ENCODE measurements at regions of chr3 and their contacts with region 1.

Region 1: DNA sequence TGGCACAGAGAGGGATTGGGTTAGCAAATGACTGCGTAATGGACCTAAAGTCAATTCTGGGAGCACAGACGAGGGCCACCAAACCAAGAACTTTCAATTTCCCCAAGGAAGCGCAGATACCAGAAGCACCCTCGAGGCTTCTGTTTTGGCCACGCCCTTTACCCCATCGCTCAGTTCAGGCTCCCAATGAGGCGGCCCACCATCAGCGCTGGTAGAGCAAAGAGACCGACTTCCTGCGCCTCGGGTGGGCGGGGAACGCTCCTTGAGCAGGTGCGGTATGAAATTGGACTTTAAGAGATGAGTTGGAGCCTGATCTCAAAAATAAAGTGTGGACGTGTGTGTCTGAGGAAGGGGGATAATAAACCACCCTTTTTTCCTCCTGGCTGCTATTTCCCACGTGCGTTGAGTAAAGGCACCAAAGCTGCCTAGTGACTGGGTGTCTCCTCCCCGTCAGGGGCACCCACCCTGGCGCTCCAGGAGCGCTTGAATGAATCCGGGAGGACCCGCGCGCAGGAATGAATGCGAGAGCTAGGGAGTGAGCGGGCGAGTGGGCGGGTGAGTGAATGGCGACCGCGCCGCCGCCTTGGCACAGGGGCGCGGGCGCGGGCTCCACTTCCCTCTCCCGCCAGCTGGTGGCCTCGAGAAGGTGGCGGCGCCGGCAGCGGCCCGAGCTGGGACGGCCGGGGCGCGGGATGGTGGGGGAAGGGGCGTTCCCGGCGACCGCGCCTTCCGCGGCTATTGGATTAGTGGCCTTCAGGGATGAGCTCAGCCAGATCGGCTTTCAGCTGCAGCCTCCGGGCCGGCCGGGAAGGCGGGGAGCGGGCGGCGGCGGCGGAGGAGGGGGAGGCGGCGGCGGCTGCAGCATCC is at the start of gene SPSB4:
- DNase-seq: peak; percentile 95
- H3K4me3 ChIP-seq: peak within 1 kb of the TSS; percentile 23 to 49; a peak in 3 of 4 replicates
- H3K27ac ChIP-seq: peak within 1 kb of the TSS in 1 of 2 experiments; percentile 50; a peak in 2 of 4 replicates
- H3K4me1 ChIP-seq: peaks cover 0 to 6% of the 10 kb centered on the region in 2 experiments; a peak in 2 of 4 replicates
- H3K27me3 ChIP-seq: peaks cover 22% of the 10 kb centered on the region
- CTCF ChIP-seq: no peak; the same call in 1 of the 2 replicates
- EP300 ChIP-seq: no peak
- RAD21 ChIP-seq: peak; percentile 51
- polyA plus RNA-seq, gene SPSB4: 0.10 and 0.21 TPM in 2 replicates

Region 2: GRCh38 chr3:140602781-140603180 is 448.0 kb before region 1 on chr3:
- CTCF ChIA-PET with region 1: no interaction called
- POLR2A ChIA-PET with region 1: no interaction called
- DNase-seq: peak; percentile 17
- H3K4me3 ChIP-seq: no peak overlapping the region
- H3K27ac ChIP-seq: peak overlapping the region in 1 of 2 experiments; percentile 75; a peak in 2 of 4 replicates
- H3K4me1 ChIP-seq: peaks cover 0 to 12% of the 10 kb centered on the region in 2 experiments; a peak in 2 of 4 replicates
- H3K27me3 ChIP-seq: no peaks in the 10 kb centered on the region
- CTCF ChIP-seq: no peak
- EP300 ChIP-seq: peak in 1 of 2 experiments; percentile 47; a peak in 1 of 4 replicates
- RAD21 ChIP-seq: no peak; the same call in 1 of the 2 replicates

Region 3: GRCh38 chr3:140870370-140870769 is 180.4 kb before region 1 on chr3:
- CTCF ChIA-PET with region 1: no interaction called
- POLR2A ChIA-PET with region 1: no interaction called
- DNase-seq: no peak
- H3K4me3 ChIP-seq: no peak overlapping the region
- H3K27ac ChIP-seq: no peak overlapping the region
- H3K4me1 ChIP-seq: no peaks in the 10 kb centered on the region
- H3K27me3 ChIP-seq: no peaks in the 10 kb centered on the region
- CTCF ChIP-seq: no peak
- EP300 ChIP-seq: no peak
- RAD21 ChIP-seq: no peak

Region 4: GRCh38 chr3:141000027-141000663 is 50.7 kb before region 1 on chr3:
- CTCF ChIA-PET with region 1: interaction called, 12 read pairs
- POLR2A ChIA-PET with region 1: no interaction called
- DNase-seq: peak; percentile 60
- H3K4me3 ChIP-seq: no peak overlapping the region; a peak in 1 of 4 replicates
- H3K27ac ChIP-seq: no peak overlapping the region
- H3K4me1 ChIP-seq: no peaks in the 10 kb centered on the region
- H3K27me3 ChIP-seq: no peaks in the 10 kb centered on the region
- CTCF ChIP-seq: peak; percentile 55
- EP300 ChIP-seq: no peak
- RAD21 ChIP-seq: peak; percentile 90

Region 5: GRCh38 chr3:141039589-141039988 is 11.2 kb before region 1 on chr3:
- CTCF ChIA-PET with region 1: interaction called, 22 read pairs
- POLR2A ChIA-PET with region 1: no interaction called
- DNase-seq: no peak
- H3K4me3 ChIP-seq: no peak overlapping the region
- H3K27ac ChIP-seq: no peak overlapping the region
- H3K4me1 ChIP-seq: no peaks in the 10 kb centered on the region
- H3K27me3 ChIP-seq: no peaks in the 10 kb centered on the region
- CTCF ChIP-seq: no peak
- EP300 ChIP-seq: no peak
- RAD21 ChIP-seq: no peak

Region 6: DNA sequence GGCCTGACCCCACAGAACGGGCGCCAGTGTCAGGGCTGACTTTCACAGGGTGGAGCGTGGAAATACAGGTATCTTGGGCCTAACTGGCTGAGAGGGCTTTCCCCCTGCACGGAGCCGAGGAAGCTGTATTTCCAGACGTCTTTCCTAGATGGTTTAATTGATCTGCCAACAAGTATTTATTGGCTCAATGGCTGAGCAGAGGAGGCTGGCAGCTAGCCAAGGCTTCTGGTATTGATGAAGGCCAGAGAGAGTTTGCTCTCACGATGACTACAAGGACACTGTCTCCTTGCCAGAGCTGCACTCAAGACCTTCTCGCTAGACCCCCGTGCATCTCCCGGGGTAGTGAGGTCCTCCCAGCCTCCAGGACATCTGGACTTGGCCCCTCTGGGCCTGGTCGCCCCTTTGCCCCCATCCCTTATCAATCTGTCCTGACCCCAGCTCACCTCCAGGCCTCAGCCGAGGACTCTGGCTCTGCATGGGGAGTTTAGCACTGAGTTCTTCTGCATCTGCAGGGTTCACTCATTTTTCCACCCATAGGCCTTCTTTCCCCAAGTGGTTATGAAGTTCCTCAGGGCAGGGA is 21.0 kb after region 1 on chr3:
- CTCF ChIA-PET with region 1: interaction called, 61 read pairs
- POLR2A ChIA-PET with region 1: interaction called, 6 read pairs
- DNase-seq: peak; percentile 49
- H3K4me3 ChIP-seq: no peak overlapping the region
- H3K27ac ChIP-seq: peak overlapping the region in 1 of 2 experiments; percentile 30; a peak in 1 of 4 replicates
- H3K4me1 ChIP-seq: peaks cover 0 to 25% of the 10 kb centered on the region in 2 experiments; a peak in 1 of 4 replicates
- H3K27me3 ChIP-seq: no peaks in the 10 kb centered on the region
- CTCF ChIP-seq: no peak
- EP300 ChIP-seq: no peak
- RAD21 ChIP-seq: no peak

Region 7: GRCh38 chr3:141084250-141084649 is 33.4 kb after region 1 on chr3:
- CTCF ChIA-PET with region 1: interaction called, 14 read pairs
- POLR2A ChIA-PET with region 1: no interaction called
- DNase-seq: peak; percentile 51
- H3K4me3 ChIP-seq: no peak overlapping the region
- H3K27ac ChIP-seq: no peak overlapping the region; a peak in 1 of 4 replicates
- H3K4me1 ChIP-seq: peaks cover 0 to 49% of the 10 kb centered on the region in 2 experiments; a peak in 1 of 4 replicates
- H3K27me3 ChIP-seq: no peaks in the 10 kb centered on the region
- CTCF ChIP-seq: no peak
- EP300 ChIP-seq: no peak; a peak in 1 of 4 replicates
- RAD21 ChIP-seq: no peak

Region 8: GRCh38 chr3:141105828-141106628 is 55.2 kb after region 1 on chr3:
- CTCF ChIA-PET with region 1: interaction called, 77 read pairs
- POLR2A ChIA-PET with region 1: interaction called, 10 read pairs
- DNase-seq: peak; percentile 76
- H3K4me3 ChIP-seq: no peak overlapping the region; a peak in 1 of 4 replicates
- H3K27ac ChIP-seq: no peak overlapping the region
- H3K4me1 ChIP-seq: peaks cover 0 to 21% of the 10 kb centered on the region in 2 experiments; a peak in 1 of 4 replicates
- H3K27me3 ChIP-seq: no peaks in the 10 kb centered on the region
- CTCF ChIP-seq: peak; percentile 81
- EP300 ChIP-seq: no peak
- RAD21 ChIP-seq: peak; percentile 87

Region 9: DNA sequence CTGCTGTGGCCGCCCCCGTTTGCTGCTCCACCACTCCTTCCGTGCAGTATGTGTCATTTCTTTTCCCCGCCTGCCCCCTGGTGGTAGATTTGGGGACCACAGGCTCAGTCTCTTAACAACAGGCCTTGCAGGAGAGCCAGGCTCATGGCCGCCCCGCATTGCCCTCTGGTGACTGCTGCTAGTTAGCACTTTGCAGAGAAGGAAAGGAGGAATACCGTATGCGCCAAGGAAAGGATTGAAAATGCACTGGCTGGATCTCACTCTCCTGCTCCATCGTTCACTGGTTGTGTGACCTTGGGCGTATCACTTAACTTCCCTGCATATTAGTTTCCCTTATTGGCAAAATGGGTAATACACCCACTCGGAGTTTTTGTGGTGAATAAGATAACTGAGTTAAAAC is 141.5 kb after region 1 on chr3:
- CTCF ChIA-PET with region 1: interaction called, 56 read pairs
- POLR2A ChIA-PET with region 1: no interaction called
- DNase-seq: peak; percentile 75
- H3K4me3 ChIP-seq: peak overlapping the region in 1 of 2 experiments; percentile 44; a peak in 1 of 4 replicates
- H3K27ac ChIP-seq: no peak overlapping the region
- H3K4me1 ChIP-seq: no peaks in the 10 kb centered on the region; a peak in 1 of 4 replicates
- H3K27me3 ChIP-seq: no peaks in the 10 kb centered on the region
- CTCF ChIP-seq: peak; percentile 98
- EP300 ChIP-seq: no peak
- RAD21 ChIP-seq: peak; percentile 98

Measured in SK-N-SH (cell line).